ENCODE measurements at regions of chr2 and their contacts with region 1.

Region 1: DNA sequence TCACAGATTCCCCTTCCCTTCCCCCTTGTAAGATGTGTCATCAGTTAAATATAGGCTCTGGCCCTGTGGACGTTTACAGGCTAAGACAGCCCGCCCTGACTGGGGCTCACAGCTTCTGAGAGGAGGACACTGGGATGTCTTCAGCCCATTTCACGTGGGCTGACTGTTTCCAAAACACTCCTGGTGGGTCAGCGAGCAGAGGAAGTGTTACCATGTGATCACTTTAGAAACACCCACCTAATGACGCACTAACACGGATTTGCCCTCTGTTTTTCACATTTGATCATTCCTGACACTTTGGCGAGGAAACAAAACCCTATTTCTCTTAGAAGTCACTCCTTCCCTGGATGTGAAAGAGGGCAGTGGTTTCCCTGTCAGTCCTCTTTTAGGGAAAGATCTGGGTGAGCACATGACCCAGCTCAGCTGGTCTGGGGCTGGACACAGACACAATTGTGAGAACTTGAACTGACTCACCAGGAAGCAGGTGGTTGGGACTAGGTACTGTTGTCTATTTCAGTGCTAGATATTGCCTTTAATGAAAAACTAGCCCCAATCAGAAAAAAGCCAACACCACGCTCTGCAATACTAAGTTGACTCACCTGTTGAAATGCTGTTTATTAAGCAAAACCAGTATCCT is 38.8 kb downstream of the BMP10 start:
- DNase-seq: no peak
- H3K4me3 Mint-ChIP-seq: peak overlapping the region; percentile 62
- H3K27ac Mint-ChIP-seq: peak overlapping the region; percentile 88
- H3K4me1 Mint-ChIP-seq: peaks cover 86% of the 10 kb centered on the region
- H3K27me3 Mint-ChIP-seq: no peaks in the 10 kb centered on the region

Region 2: DNA sequence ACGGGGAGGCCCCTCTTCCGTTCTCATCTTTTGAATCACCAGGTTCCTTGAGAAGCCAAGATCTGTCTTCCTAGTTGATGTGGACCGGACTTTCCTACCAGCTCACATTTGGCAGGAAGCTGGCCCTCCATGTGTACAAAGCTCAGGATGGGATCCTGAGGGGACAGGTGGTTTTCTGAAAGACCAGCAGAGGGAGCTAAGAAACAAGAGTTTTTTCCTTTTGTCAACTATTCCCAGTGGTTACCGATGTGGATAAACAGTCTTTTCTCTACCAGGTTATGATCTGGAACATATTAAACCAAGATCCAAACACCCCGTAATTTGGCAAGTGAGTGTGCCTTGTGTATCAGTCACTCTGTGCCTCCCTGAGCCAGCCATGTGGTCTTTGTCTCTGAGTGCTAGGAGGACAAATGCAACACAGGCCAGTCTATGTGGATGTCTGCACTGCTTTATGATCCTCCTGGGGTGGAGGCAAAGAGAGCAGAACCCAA is 122.9 kb before region 1 on chr2:
- intact Hi-C with region 1: loop called (anchors 1 kb)
- DNase-seq: no peak
- H3K4me3 Mint-ChIP-seq: no peak overlapping the region
- H3K27ac Mint-ChIP-seq: no peak overlapping the region
- H3K4me1 Mint-ChIP-seq: peaks cover 36% of the 10 kb centered on the region
- H3K27me3 Mint-ChIP-seq: peaks cover 6% of the 10 kb centered on the region

Region 3: GRCh38 chr2:68751397-68752339 is 80.7 kb before region 1 on chr2:
- intact Hi-C with region 1: loop called (anchors 1 kb)
- DNase-seq: peak; percentile 78
- H3K4me3 Mint-ChIP-seq: peak overlapping the region; percentile 38
- H3K27ac Mint-ChIP-seq: peak overlapping the region; percentile 84
- H3K4me1 Mint-ChIP-seq: peaks cover 91% of the 10 kb centered on the region
- H3K27me3 Mint-ChIP-seq: no peaks in the 10 kb centered on the region

Region 4: DNA sequence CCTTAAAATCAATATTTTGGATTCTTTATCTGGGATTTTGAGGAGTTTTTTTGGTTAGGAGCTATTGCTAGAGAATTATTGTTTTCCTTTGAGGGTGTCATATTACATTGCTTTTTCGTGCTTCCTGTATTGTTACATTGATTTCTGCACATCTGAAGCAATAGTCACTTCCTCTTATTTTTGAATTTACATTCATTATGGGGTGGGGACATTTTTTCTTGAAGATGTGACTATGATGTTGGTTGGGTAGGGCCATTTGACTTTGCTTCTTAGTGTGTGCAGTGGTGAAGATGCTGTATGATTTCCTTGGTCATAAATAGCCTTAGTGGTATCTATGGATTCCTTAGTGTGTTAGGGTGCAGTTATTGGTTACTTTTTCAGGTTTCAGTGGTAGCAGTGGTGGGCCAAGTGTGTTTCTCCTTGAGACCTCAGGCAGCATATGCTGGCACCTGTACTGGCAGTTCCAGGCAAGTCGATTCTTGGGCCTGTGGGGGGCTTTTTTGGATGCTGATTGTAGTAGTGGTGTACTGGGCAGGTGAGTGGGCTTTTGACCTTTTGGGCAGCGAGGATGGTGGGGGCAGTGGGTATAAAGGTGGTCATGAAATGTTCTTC is 36.0 kb before region 1 on chr2:
- intact Hi-C with region 1: loop called (anchors 5 kb)
- DNase-seq: no peak
- H3K4me3 Mint-ChIP-seq: peak overlapping the region; percentile 12
- H3K27ac Mint-ChIP-seq: peak overlapping the region; percentile 37
- H3K4me1 Mint-ChIP-seq: peaks cover 69% of the 10 kb centered on the region
- H3K27me3 Mint-ChIP-seq: no peaks in the 10 kb centered on the region

Region 5: GRCh38 chr2:68925295-68925896 is 93.0 kb after region 1 on chr2:
- intact Hi-C with region 1: loop called (anchors 1 kb)
- DNase-seq: peak; percentile 34
- H3K4me3 Mint-ChIP-seq: no peak overlapping the region
- H3K27ac Mint-ChIP-seq: no peak overlapping the region
- H3K4me1 Mint-ChIP-seq: peaks cover 12% of the 10 kb centered on the region
- H3K27me3 Mint-ChIP-seq: peaks cover 18% of the 10 kb centered on the region

Region 6: DNA sequence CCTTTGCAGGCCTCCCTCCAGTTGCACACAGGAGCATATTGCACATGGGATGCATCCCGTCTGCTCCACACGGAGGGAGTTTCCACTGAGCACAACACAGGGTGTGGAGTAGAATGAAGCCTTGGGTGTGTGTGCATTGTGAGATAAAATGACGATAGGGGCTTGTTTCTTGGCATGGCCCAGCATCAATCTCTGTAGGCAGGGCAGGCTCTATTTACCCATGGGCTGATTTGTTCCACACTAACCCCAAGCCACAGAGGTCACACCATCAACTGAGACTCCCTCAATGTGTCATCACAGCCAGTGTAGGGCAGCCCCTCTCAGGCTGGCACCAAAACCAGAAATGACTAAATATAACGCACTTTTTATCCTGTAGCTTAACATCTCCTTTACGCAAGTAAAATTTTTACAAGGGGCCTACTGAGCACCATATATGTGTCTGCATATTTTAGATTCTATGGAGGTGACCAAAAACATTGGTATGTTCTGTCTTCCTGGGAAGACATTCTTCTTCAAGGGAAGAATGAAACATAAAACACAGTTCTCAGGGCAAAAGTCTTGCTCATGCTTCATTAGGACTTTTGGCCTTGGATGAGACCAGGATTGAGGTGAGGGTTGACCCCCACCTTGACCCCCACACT is 139.4 kb after region 1 on chr2:
- intact Hi-C with region 1: no loop called
- DNase-seq: no peak
- H3K4me3 Mint-ChIP-seq: no peak overlapping the region
- H3K27ac Mint-ChIP-seq: no peak overlapping the region
- H3K4me1 Mint-ChIP-seq: no peaks in the 10 kb centered on the region
- H3K27me3 Mint-ChIP-seq: peaks cover 16% of the 10 kb centered on the region